ENCODE measurements at regions of chr12 and their contacts with region 1.

Region 1: GRCh38 chr12:111288771-111289170 is 80.1 kb downstream of the PHETA1 start:
- DNase-seq: no peak
- ATAC-seq: no peak
- H3K4me3 ChIP-seq: no peak overlapping the region
- H3K27ac ChIP-seq: no peak overlapping the region
- H3K4me1 ChIP-seq: no peaks in the 10 kb centered on the region
- H3K27me3 ChIP-seq: no peaks in the 10 kb centered on the region
- CTCF ChIP-seq: no peak

Region 2: DNA sequence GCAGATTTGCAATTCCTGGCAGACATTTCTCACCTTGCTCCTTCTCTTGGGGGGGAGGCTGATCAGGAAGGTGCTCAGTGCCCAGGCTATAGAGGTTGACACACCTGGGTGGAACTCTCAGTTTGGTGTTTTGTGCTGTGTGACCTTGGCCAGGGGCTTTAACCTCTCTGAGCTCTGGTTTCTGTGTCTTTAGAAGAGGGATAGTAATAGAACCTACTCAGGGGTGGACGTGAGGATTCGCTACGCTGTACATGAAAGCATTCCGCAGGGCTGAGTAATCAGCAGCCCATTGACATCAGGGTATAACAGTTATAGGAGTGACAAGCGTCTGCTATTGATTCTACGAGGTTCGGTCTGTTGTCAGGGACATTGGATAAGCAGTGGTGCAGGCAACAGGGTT is 18.0 kb before region 1 on chr12:
- intact Hi-C with region 1: loop called in 1 of 2 experiments (anchors 1 kb)
- DNase-seq: no peak
- ATAC-seq: no peak
- H3K4me3 ChIP-seq: no peak overlapping the region
- H3K27ac ChIP-seq: no peak overlapping the region
- H3K4me1 ChIP-seq: no peaks in the 10 kb centered on the region
- H3K27me3 ChIP-seq: peaks cover 0 to 53% (median 13%) of the 10 kb centered on the region in 3 donors
- CTCF ChIP-seq: no peak

Measured in psoas muscle (tissue), 8 donors.